CD4-positive, alpha-beta memory T cell (primary cell): ENCODE measurements at regions of chr12 and their contacts with region 1.

Region 1: DNA sequence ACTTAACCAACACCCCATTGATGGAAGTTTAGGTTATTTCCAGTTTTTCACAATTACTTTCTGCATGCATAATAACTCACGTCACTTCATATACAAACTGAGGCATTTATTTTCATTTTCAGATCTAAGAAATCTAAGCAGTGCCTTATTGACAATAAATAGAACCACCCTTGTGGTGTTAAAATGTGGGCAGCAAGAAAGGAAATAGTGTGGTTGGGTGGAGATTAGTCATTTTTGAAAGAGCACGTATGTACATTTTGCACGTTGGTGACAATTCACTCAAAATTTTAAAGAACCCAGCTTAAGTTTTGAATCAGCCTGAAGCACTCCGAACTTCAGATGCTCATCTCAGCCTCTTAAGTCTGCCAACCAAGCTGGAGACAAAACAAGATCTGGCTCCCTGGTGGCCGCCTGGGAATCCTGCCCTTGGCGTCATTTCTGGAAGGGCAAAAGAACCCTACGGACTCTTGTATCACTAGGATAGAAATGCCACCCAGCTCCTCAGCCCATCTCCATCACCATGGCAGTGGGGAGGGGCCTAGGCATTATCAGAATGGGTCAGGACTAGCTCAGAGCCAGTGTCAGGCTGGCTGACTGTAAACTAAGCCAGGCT is 89.5 kb upstream of the BCL2L14 start:
- DNase-seq: peak; percentile 86 to 94 (median 88)
- H3K4me3 ChIP-seq: peak overlapping the region; percentile 4 to 29
- H3K4me3 Mint-ChIP-seq: peak overlapping the region; percentile 2 to 74 (median 70)
- H3K27ac ChIP-seq: peak overlapping the region; percentile 74
- H3K27ac Mint-ChIP-seq: peak overlapping the region; percentile 88 to 99 (median 97)
- H3K4me1 ChIP-seq: peaks cover 59% of the 10 kb centered on the region
- H3K4me1 Mint-ChIP-seq: peaks cover 47 to 61% (median 57%) of the 10 kb centered on the region in 4 donors
- H3K27me3 ChIP-seq: no peaks in the 10 kb centered on the region
- H3K27me3 Mint-ChIP-seq: no peaks in the 10 kb centered on the region

Region 2: GRCh38 chr12:11621797-11622423 is 359.3 kb before region 1 on chr12:
- CTCF ChIA-PET with region 1: no interaction called
- POLR2A ChIA-PET with region 1: no interaction called
- intact Hi-C with region 1: no loop called
- DNase-seq: peak; percentile 21 to 43 (median 34)
- H3K4me3 ChIP-seq: no peak overlapping the region
- H3K4me3 Mint-ChIP-seq: no peak overlapping the region
- H3K27ac ChIP-seq: no peak overlapping the region
- H3K27ac Mint-ChIP-seq: peak overlapping the region in 2 of 7 donors; percentile 39 to 91
- H3K4me1 ChIP-seq: no peaks in the 10 kb centered on the region
- H3K4me1 Mint-ChIP-seq: peaks cover 0 to 6% (median 3%) of the 10 kb centered on the region in 4 donors
- H3K27me3 ChIP-seq: no peaks in the 10 kb centered on the region
- H3K27me3 Mint-ChIP-seq: no peaks in the 10 kb centered on the region

Region 3: DNA sequence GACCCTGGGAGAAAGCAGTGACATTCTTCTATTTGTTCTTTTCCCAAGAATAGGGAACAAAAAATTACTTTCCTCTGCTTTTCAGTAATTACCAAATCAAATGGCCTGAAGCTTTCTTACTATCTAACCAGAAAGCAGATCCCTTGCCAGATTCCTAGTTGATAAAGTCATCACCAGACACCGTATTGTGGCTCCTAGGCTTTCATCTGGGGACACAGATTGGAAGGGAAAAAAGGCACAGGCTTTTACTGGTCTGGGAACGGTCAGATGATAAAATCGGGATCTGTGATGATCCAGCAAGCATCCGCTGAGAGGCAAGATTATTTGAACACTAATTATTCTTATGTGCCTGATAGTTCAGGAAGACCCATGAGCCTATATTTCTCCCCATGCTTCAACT is 10.4 kb after region 1 on chr12:
- CTCF ChIA-PET with region 1: interaction called, 3 read pairs
- POLR2A ChIA-PET with region 1: interaction called, 10 read pairs
- intact Hi-C with region 1: no loop called
- DNase-seq: no peak
- H3K4me3 ChIP-seq: no peak overlapping the region
- H3K4me3 Mint-ChIP-seq: no peak overlapping the region
- H3K27ac ChIP-seq: no peak overlapping the region
- H3K27ac Mint-ChIP-seq: no peak overlapping the region
- H3K4me1 ChIP-seq: no peaks in the 10 kb centered on the region
- H3K4me1 Mint-ChIP-seq: peaks cover 10 to 29% (median 11%) of the 10 kb centered on the region in 4 donors
- H3K27me3 ChIP-seq: no peaks in the 10 kb centered on the region
- H3K27me3 Mint-ChIP-seq: no peaks in the 10 kb centered on the region

Region 4: GRCh38 chr12:11998944-11999315 is 17.7 kb after region 1 on chr12:
- CTCF ChIA-PET with region 1: interaction called, 3 read pairs
- POLR2A ChIA-PET with region 1: interaction called, 50 read pairs
- intact Hi-C with region 1: loop called (anchors 2 kb)
- DNase-seq: no peak
- H3K4me3 ChIP-seq: peak overlapping the region in 1 of 2 donors; percentile 45
- H3K4me3 Mint-ChIP-seq: peak overlapping the region; percentile 6 to 71 (median 58)
- H3K27ac ChIP-seq: no peak overlapping the region
- H3K27ac Mint-ChIP-seq: peak overlapping the region; percentile 86 to 96 (median 93)
- H3K4me1 ChIP-seq: peaks cover 36% of the 10 kb centered on the region
- H3K4me1 Mint-ChIP-seq: peaks cover 29 to 64% (median 40%) of the 10 kb centered on the region in 4 donors
- H3K27me3 ChIP-seq: no peaks in the 10 kb centered on the region
- H3K27me3 Mint-ChIP-seq: no peaks in the 10 kb centered on the region